Endothelial cell of umbilical vein (primary cell): ENCODE measurements at regions of chr10 and their contacts with region 1.

Region 1: GRCh38 chr10:114103284-114103683 is 59.6 kb downstream of the ADRB1 start:
- DNase-seq: peak; percentile 59
- H3K4me3 ChIP-seq: no peak overlapping the region
- H3K27ac ChIP-seq: no peak overlapping the region
- H3K4me1 ChIP-seq: peaks cover 9% of the 10 kb centered on the region
- H3K27me3 ChIP-seq: peaks cover 0 to 3% of the 10 kb centered on the region in 2 experiments
- CTCF ChIP-seq: peak; percentile 32
- POLR2A ChIP-seq: no peak

Region 2: GRCh38 chr10:113385021-113385999 is 718.0 kb before region 1 on chr10:
- CTCF ChIA-PET with region 1: no interaction called
- POLR2A ChIA-PET with region 1: no interaction called
- dilution Hi-C with region 1: no loop called
- intact Hi-C with region 1: no loop called
- DNase-seq: peak; percentile 83
- H3K4me3 ChIP-seq: no peak overlapping the region
- H3K27ac ChIP-seq: no peak overlapping the region
- H3K4me1 ChIP-seq: peaks cover 28% of the 10 kb centered on the region
- H3K27me3 ChIP-seq: peaks cover 1 to 5% of the 10 kb centered on the region in 2 experiments
- CTCF ChIP-seq: peak; percentile 78 to 90
- POLR2A ChIP-seq: no peak

Region 3: GRCh38 chr10:113704637-113705343 is 398.5 kb before region 1 on chr10:
- CTCF ChIA-PET with region 1: interaction called, 52 read pairs
- POLR2A ChIA-PET with region 1: no interaction called
- dilution Hi-C with region 1: no loop called
- intact Hi-C with region 1: loop called (anchors 1 kb)
- DNase-seq: peak; percentile 50
- H3K4me3 ChIP-seq: no peak overlapping the region
- H3K27ac ChIP-seq: no peak overlapping the region
- H3K4me1 ChIP-seq: peaks cover 20% of the 10 kb centered on the region
- H3K27me3 ChIP-seq: no peaks in the 10 kb centered on the region
- CTCF ChIP-seq: peak; percentile 52 to 59
- POLR2A ChIP-seq: no peak

Region 4: GRCh38 chr10:113854011-113854760 is 249.1 kb before region 1 on chr10 and contains the starts of genes DCLRE1A and NHLRC2:
- CTCF ChIA-PET with region 1: interaction called, 5 read pairs
- POLR2A ChIA-PET with region 1: no interaction called
- dilution Hi-C with region 1: no loop called
- intact Hi-C with region 1: loop called (anchors 1 kb)
- DNase-seq: peak; percentile 84
- H3K4me3 ChIP-seq: peak within 1 kb of the TSS; percentile 87 to 99 (median 87)
- H3K27ac ChIP-seq: peak within 1 kb of the TSS; percentile 96
- H3K4me1 ChIP-seq: peaks cover 43% of the 10 kb centered on the region
- H3K27me3 ChIP-seq: no peaks in the 10 kb centered on the region
- CTCF ChIP-seq: no peak
- POLR2A ChIP-seq: no peak
- total RNA-seq, gene DCLRE1A: 5.4 and 6.7 TPM in 2 replicates
- total RNA-seq, gene NHLRC2: 28.2 and 34.5 TPM in 2 replicates

Region 5: GRCh38 chr10:114024876-114025610 is 78.2 kb before region 1 on chr10:
- CTCF ChIA-PET with region 1: no interaction called
- POLR2A ChIA-PET with region 1: no interaction called
- dilution Hi-C with region 1: no loop called
- intact Hi-C with region 1: loop called (anchors 5 kb)
- DNase-seq: no peak
- H3K4me3 ChIP-seq: no peak overlapping the region
- H3K27ac ChIP-seq: peak overlapping the region; percentile 95
- H3K4me1 ChIP-seq: peaks cover 34% of the 10 kb centered on the region
- H3K27me3 ChIP-seq: no peaks in the 10 kb centered on the region
- CTCF ChIP-seq: no peak
- POLR2A ChIP-seq: no peak

Region 6: GRCh38 chr10:114356751-114357514 is 253.6 kb after region 1 on chr10:
- CTCF ChIA-PET with region 1: no interaction called
- POLR2A ChIA-PET with region 1: no interaction called
- dilution Hi-C with region 1: no loop called
- intact Hi-C with region 1: no loop called
- DNase-seq: peak; percentile 50
- H3K4me3 ChIP-seq: no peak overlapping the region
- H3K27ac ChIP-seq: no peak overlapping the region
- H3K4me1 ChIP-seq: no peaks in the 10 kb centered on the region
- H3K27me3 ChIP-seq: peaks cover 8 to 28% of the 10 kb centered on the region in 2 experiments
- CTCF ChIP-seq: no peak
- POLR2A ChIP-seq: no peak